ENCODE measurements at regions of chr6 and their contacts with region 1.

Region 1: DNA sequence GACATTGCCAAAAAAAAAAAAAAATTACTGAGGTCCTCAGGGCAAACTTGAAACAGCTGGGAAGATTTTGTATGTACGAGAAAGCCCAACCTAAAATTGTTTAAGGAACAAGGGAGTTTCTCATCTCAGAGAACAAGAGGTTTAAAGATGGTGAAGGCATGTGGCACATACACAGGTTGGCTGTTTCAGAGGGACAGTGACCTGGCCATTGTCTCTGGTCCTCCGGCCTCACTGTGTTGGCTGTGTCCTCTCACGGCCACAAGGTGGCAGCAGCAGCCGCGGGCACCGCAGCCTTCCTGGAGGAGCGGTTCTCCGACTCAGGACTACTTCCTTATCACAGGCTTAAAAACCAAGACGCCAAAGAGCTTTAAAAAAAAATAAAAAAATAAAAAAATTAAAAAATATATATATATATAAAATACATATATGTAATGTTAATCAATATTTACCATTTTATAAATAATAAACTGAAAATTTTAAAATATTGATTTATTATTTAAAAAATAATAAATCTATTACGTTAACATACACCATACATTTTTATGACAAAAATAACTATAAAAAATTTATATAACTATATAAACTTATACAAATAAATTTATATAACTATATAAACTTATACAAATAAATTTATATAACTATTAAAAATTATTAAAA is 52.8 kb downstream of the GTF2H5 start:
- DNase-seq: no peak
- H3K4me3 ChIP-seq: no peak overlapping the region
- H3K27ac ChIP-seq: no peak overlapping the region
- H3K27me3 ChIP-seq: no peaks in the 10 kb centered on the region
- CTCF ChIP-seq: peak; percentile 92

Region 2: GRCh38 chr6:158231551-158232315 is 10.8 kb after region 1 on chr6:
- CTCF ChIA-PET with region 1: interaction called, 21 read pairs
- POLR2A ChIA-PET with region 1: no interaction called
- DNase-seq: no peak
- H3K4me3 ChIP-seq: peak overlapping the region; percentile 82
- H3K27ac ChIP-seq: peak overlapping the region; percentile 83
- H3K27me3 ChIP-seq: no peaks in the 10 kb centered on the region
- CTCF ChIP-seq: no peak

Region 3: DNA sequence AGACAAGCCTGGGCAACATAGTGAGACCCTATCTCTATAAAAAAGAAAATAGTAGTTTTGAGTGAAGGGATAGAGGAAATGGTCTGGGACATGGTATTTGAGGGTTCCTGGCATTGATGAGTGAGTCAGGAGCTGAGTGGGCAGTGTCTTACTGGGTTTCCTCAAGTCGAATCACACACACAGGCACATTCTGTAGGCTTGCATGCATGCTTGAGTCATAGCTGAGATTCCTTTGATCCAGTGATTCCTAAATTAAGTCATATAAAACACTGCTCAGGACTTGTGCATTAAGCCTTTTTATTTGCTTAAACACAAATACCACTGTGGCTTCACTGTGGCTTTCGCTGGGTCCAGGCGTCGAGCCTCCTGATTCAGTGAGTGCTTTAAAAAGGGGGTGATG is 267.2 kb after region 1 on chr6:
- CTCF ChIA-PET with region 1: interaction called, 14 read pairs
- POLR2A ChIA-PET with region 1: interaction called, 10 read pairs
- DNase-seq: peak; percentile 88
- H3K4me3 ChIP-seq: no peak overlapping the region
- H3K27ac ChIP-seq: peak overlapping the region; percentile 84
- H3K27me3 ChIP-seq: no peaks in the 10 kb centered on the region
- CTCF ChIP-seq: no peak

Region 4: GRCh38 chr6:158552055-158552795 is 331.3 kb after region 1 on chr6:
- CTCF ChIA-PET with region 1: interaction called, 17 read pairs
- POLR2A ChIA-PET with region 1: no interaction called
- DNase-seq: no peak
- H3K4me3 ChIP-seq: no peak overlapping the region
- H3K27ac ChIP-seq: no peak overlapping the region
- H3K27me3 ChIP-seq: no peaks in the 10 kb centered on the region
- CTCF ChIP-seq: no peak

Region 5: DNA sequence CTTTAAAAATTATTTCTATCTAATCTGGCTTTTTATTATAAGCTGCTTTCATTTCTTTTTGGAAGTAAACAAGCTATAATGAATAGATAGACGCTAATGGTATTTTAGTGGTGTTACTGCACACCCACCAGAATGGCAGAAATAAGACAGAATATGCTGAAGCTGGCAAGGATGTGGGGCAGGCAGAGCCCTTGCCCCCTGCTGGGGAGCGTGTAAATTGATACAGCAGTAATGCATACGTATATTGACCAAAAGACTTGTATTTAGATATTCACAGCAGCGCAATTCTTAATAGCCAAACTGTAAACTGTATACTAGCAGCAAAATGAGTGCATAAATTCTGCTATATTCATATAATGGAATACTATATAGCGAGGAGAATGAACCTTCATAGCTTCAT is 374.3 kb after region 1 on chr6:
- CTCF ChIA-PET with region 1: interaction called, 111 read pairs
- POLR2A ChIA-PET with region 1: no interaction called
- DNase-seq: no peak
- H3K4me3 ChIP-seq: no peak overlapping the region
- H3K27ac ChIP-seq: no peak overlapping the region
- H3K27me3 ChIP-seq: no peaks in the 10 kb centered on the region
- CTCF ChIP-seq: peak; percentile 40

Region 6: GRCh38 chr6:158686791-158687381 is 466.0 kb after region 1 on chr6:
- CTCF ChIA-PET with region 1: interaction called, 84 read pairs
- POLR2A ChIA-PET with region 1: no interaction called
- DNase-seq: no peak
- H3K4me3 ChIP-seq: no peak overlapping the region
- H3K27ac ChIP-seq: no peak overlapping the region
- H3K27me3 ChIP-seq: no peaks in the 10 kb centered on the region
- CTCF ChIP-seq: no peak